Naive thymus-derived CD4-positive, alpha-beta T cell (primary cell): ENCODE measurements at regions of chr12 and their contacts with region 1.

Region 1: DNA sequence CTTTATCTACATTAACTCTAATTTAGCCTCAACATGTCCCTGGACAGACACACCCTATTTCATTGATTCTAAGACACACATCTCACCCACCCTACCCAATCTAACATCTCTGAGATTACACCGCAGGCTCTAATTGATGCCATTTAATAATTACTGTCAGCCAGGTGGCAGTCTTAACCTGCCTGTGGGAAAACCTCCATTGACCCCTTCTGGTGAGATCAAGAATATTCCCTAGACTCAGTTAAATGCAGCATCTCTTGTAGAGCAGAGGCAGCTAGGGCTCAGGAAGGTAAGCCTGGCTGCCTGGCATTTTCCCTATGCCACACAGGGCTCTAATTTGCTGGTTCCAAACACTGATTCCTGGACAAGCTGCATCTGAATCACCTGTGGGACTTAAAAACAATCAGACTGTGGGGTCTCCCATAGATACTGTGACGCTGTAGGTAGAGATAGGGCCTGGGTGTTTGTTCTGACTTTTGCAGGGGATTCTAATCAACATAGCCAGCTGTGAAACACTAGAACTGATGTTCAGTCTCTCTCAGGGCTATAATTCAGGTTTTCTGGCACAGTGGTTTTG is 14.3 kb downstream of the MCRS1 start:
- DNase-seq: peak in 6 of 9 donors; percentile 33 to 61 (median 48)
- ATAC-seq: peak; percentile 68
- H3K4me3 ChIP-seq: no peak overlapping the region
- H3K4me3 Mint-ChIP-seq: no peak overlapping the region
- H3K27ac ChIP-seq: no peak overlapping the region
- H3K27ac Mint-ChIP-seq: peak overlapping the region in 2 of 9 donors; percentile 9 to 24
- H3K4me1 ChIP-seq: peaks cover 0 to 6% of the 10 kb centered on the region in 2 donors
- H3K4me1 Mint-ChIP-seq: peaks cover 5 to 22% (median 8%) of the 10 kb centered on the region in 7 donors
- H3K27me3 ChIP-seq: no peaks in the 10 kb centered on the region
- H3K27me3 Mint-ChIP-seq: peaks cover 0 to 20% (median 0%) of the 10 kb centered on the region in 5 donors

Region 2: DNA sequence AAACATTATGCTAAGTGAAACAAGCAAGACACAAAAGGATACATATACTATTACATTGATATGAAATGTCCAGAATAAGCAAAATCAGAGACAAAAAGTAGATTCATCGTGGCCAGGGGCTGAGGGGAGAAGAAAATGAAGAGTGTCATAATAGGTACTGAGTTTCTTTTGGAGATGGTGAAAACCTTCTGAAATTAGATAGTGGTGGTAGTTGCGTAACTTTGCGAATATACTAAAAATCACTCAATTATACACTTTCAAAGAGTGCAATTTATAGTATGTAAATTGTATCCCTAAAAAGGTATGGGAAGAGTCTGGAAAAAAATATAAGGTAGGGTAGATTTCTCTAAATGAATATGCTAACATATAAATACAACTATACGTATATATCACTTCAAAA is 893.7 kb before region 1 on chr12:
- CTCF ChIA-PET with region 1: no interaction called
- POLR2A ChIA-PET with region 1: no interaction called
- intact Hi-C with region 1: no loop called
- DNase-seq: no peak
- ATAC-seq: no peak
- H3K4me3 ChIP-seq: no peak overlapping the region
- H3K4me3 Mint-ChIP-seq: no peak overlapping the region
- H3K27ac ChIP-seq: no peak overlapping the region
- H3K27ac Mint-ChIP-seq: peak overlapping the region in 1 of 9 donors; percentile 1
- H3K4me1 ChIP-seq: no peaks in the 10 kb centered on the region
- H3K4me1 Mint-ChIP-seq: peaks cover 0 to 9% (median 0%) of the 10 kb centered on the region in 7 donors
- H3K27me3 ChIP-seq: no peaks in the 10 kb centered on the region
- H3K27me3 Mint-ChIP-seq: no peaks in the 10 kb centered on the region

Region 3: DNA sequence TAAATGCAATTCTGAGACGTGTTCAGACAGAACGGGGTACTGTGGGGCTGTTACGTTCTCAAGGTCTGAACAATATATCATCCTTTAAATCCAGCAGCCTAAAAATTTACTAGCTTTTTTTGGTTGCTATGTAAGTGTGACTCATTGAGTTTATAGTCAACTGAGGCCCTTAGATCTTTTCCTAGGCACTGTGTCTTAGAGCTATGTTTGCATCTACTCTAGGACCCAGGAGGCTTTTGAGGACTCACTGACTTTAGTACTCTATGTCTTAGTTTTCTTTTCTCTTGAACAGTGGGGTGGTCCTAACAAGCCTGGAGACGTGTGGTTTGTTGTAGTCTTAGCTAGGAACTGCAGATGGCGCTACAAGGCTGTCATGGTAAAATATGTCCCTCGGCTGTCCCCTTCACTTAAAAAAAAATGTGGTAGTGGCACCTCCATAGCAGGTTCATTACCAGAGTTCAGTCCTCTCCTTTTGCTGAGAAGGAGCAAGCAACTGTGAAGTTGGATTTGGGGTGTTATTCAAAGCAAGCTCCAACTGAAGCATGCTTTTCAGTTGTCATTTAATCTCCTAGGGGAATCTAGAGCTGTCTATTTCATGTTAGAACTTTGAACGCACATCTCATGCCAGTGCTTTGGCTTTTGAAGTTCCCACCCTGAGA is 195.0 kb before region 1 on chr12:
- CTCF ChIA-PET with region 1: interaction called, 13 read pairs
- POLR2A ChIA-PET with region 1: interaction called, 3 read pairs
- intact Hi-C with region 1: loop called in 1 of 2 experiments (anchors 1 kb)
- DNase-seq: peak in 7 of 9 donors; percentile 48 to 75 (median 63)
- ATAC-seq: peak; percentile 95
- H3K4me3 ChIP-seq: no peak overlapping the region
- H3K4me3 Mint-ChIP-seq: no peak overlapping the region
- H3K27ac ChIP-seq: no peak overlapping the region
- H3K27ac Mint-ChIP-seq: no peak overlapping the region
- H3K4me1 ChIP-seq: no peaks in the 10 kb centered on the region
- H3K4me1 Mint-ChIP-seq: peaks cover 0 to 7% (median 4%) of the 10 kb centered on the region in 7 donors
- H3K27me3 ChIP-seq: no peaks in the 10 kb centered on the region
- H3K27me3 Mint-ChIP-seq: peaks cover 8 to 48% (median 30%) of the 10 kb centered on the region in 5 donors

Region 4: DNA sequence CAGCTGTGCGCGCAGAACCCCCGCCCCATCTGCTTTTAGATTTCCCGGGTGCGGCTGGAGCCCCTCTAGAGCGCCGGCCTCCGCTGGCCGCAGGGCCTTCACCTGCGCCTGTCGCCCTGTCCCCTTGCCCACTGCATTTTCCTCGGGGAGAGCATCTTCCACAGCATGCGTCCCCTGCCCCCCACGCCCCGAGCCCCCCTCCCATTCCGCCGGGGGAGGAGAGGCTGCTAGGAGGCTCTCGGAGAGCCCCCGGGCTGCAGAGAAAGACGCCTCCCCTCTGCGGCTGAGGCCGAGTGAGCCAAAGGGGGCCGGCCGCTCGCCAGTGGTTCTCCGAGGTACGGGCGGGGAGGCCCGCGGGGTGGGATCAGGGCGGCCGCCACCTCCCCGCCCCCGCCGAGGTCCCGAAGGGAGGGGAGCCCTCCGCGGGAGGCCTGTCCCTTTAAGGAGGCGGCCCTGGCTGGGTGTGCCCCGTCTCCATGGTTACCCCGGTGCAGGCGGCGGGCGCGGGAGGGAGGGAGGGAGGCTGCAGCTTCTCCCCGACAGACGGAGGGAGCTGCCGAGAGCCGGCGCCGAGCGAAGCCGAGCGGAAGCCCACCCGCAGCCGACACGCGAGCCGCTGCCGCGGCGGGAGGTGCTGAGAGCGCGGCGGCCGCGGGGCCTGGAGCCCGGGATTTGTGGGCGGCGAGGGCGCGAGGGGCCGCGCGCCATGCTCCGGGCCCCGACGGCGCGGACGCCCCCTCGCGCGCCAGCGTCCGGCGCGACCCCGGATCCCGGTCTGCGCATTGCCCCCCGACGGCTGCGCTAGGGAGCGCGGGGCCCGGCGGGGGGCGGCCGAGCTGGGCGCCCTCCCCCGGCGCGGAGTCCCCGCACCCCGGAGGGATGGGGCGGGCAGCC is 14.8 kb before region 1 on chr12 and contains the start of gene KCNH3:
- CTCF ChIA-PET with region 1: interaction called, 7 read pairs
- POLR2A ChIA-PET with region 1: interaction called, 6 read pairs
- intact Hi-C with region 1: loop called in 1 of 2 experiments (anchors 1 kb)
- DNase-seq: peak; percentile 66 to 95 (median 86)
- ATAC-seq: peak; percentile 94
- H3K4me3 ChIP-seq: peak within 1 kb of the TSS; percentile 69
- H3K4me3 Mint-ChIP-seq: peak within 1 kb of the TSS; percentile 66 to 87 (median 80)
- H3K27ac ChIP-seq: peak within 1 kb of the TSS; percentile 11
- H3K27ac Mint-ChIP-seq: peak within 1 kb of the TSS in 6 of 9 donors; percentile 43 to 81 (median 64)
- H3K4me1 ChIP-seq: peaks cover 14 to 15% of the 10 kb centered on the region in 2 donors
- H3K4me1 Mint-ChIP-seq: peaks cover 13 to 37% (median 27%) of the 10 kb centered on the region in 7 donors
- H3K27me3 ChIP-seq: no peaks in the 10 kb centered on the region
- H3K27me3 Mint-ChIP-seq: peaks cover 0 to 66% (median 6%) of the 10 kb centered on the region in 5 donors
- total RNA-seq, gene KCNH3: 0.99 to 5.3 (median 3.8) TPM

Region 5: GRCh38 chr12:49580572-49581535 is 27.3 kb after region 1 on chr12:
- CTCF ChIA-PET with region 1: interaction called, 10 read pairs
- POLR2A ChIA-PET with region 1: no interaction called
- intact Hi-C with region 1: loop called (anchors 1 kb)
- DNase-seq: peak; percentile 26 to 55 (median 43)
- ATAC-seq: peak; percentile 80
- H3K4me3 ChIP-seq: no peak overlapping the region
- H3K4me3 Mint-ChIP-seq: no peak overlapping the region
- H3K27ac ChIP-seq: no peak overlapping the region
- H3K27ac Mint-ChIP-seq: peak overlapping the region in 1 of 9 donors; percentile 5
- H3K4me1 ChIP-seq: peaks cover 3 to 5% of the 10 kb centered on the region in 2 donors
- H3K4me1 Mint-ChIP-seq: peaks cover 12 to 18% (median 16%) of the 10 kb centered on the region in 7 donors
- H3K27me3 ChIP-seq: no peaks in the 10 kb centered on the region
- H3K27me3 Mint-ChIP-seq: no peaks in the 10 kb centered on the region

Region 6: DNA sequence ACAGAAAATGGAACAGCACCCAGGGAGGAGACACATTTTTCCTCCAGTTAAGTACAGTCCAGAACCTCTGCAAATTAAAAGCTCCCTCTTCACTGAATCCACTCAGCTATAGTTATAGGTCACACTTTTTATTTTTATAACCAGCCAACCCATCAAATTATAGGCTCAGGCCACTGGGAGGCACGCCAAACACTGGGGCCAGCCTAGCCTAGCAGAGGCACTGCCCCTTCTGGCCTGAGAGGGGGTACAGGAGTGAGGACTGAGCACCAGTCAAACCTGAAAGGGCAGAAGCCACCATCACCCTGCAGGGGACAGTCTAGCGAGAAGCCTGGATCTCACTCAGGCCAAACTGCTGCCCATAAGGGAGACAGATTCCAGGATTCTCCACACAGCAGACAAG is 134.3 kb after region 1 on chr12:
- CTCF ChIA-PET with region 1: no interaction called
- POLR2A ChIA-PET with region 1: no interaction called
- intact Hi-C with region 1: no loop called
- DNase-seq: no peak
- ATAC-seq: no peak
- H3K4me3 ChIP-seq: no peak overlapping the region
- H3K4me3 Mint-ChIP-seq: no peak overlapping the region
- H3K27ac ChIP-seq: no peak overlapping the region
- H3K27ac Mint-ChIP-seq: peak overlapping the region in 5 of 9 donors; percentile 14 to 62 (median 28)
- H3K4me1 ChIP-seq: peaks cover 0 to 3% of the 10 kb centered on the region in 2 donors
- H3K4me1 Mint-ChIP-seq: peaks cover 42 to 80% (median 66%) of the 10 kb centered on the region in 7 donors
- H3K27me3 ChIP-seq: no peaks in the 10 kb centered on the region
- H3K27me3 Mint-ChIP-seq: no peaks in the 10 kb centered on the region

Region 7: GRCh38 chr12:49939707-49940106 is 386.1 kb after region 1 on chr12:
- CTCF ChIA-PET with region 1: interaction called, 12 read pairs
- POLR2A ChIA-PET with region 1: no interaction called
- intact Hi-C with region 1: no loop called
- DNase-seq: no peak
- ATAC-seq: no peak
- H3K4me3 ChIP-seq: no peak overlapping the region
- H3K4me3 Mint-ChIP-seq: no peak overlapping the region
- H3K27ac ChIP-seq: no peak overlapping the region
- H3K27ac Mint-ChIP-seq: no peak overlapping the region
- H3K4me1 ChIP-seq: no peaks in the 10 kb centered on the region
- H3K4me1 Mint-ChIP-seq: peaks cover 0 to 16% (median 0%) of the 10 kb centered on the region in 7 donors
- H3K27me3 ChIP-seq: no peaks in the 10 kb centered on the region
- H3K27me3 Mint-ChIP-seq: peaks cover 0 to 11% (median 2%) of the 10 kb centered on the region in 5 donors

Region 8: GRCh38 chr12:50234347-50234746 is 680.7 kb after region 1 on chr12:
- CTCF ChIA-PET with region 1: no interaction called
- POLR2A ChIA-PET with region 1: no interaction called
- intact Hi-C with region 1: no loop called
- DNase-seq: no peak
- ATAC-seq: no peak
- H3K4me3 ChIP-seq: no peak overlapping the region
- H3K4me3 Mint-ChIP-seq: no peak overlapping the region
- H3K27ac ChIP-seq: no peak overlapping the region
- H3K27ac Mint-ChIP-seq: no peak overlapping the region
- H3K4me1 ChIP-seq: no peaks in the 10 kb centered on the region
- H3K4me1 Mint-ChIP-seq: peaks cover 0 to 5% (median 0%) of the 10 kb centered on the region in 7 donors
- H3K27me3 ChIP-seq: no peaks in the 10 kb centered on the region
- H3K27me3 Mint-ChIP-seq: no peaks in the 10 kb centered on the region